Endothelial cell of umbilical vein (primary cell): ENCODE measurements at regions of chr10 and their contacts with region 1.

Region 1: GRCh38 chr10:17249820-17250219 is 21.8 kb downstream of the VIM start:
- DNase-seq: peak; percentile 50
- H3K4me3 ChIP-seq: no peak overlapping the region
- H3K27ac ChIP-seq: no peak overlapping the region
- H3K4me1 ChIP-seq: no peaks in the 10 kb centered on the region
- H3K27me3 ChIP-seq: no peaks in the 10 kb centered on the region
- CTCF ChIP-seq: peak; percentile 45 to 53
- POLR2A ChIP-seq: no peak

Region 2: DNA sequence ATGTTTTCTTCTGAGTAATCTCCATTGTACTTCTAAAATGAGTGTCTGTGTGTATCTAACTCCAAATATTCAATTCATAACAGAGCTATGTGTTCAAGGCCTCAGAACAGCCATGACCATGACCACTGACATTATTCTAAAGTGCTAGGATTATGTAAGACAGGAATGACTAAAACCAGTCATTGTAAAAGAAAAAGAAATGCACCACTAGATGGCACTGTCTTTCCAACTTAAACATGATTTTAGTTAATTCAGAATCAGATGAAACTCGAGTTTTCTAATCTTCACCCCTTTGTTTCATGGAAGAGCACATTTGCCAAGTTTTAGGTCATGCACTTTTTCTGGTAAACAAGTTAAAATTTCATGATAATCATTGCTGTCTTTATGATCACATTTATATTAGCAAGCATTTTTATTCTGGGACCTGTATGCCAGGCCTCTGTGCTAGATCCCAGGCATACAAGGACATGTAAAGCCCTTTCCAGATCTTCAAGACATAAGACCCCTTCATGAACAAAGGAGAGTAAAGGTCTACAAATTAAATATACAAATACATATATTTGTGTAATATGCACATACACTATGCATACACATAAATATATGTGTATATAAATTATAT is 406.5 kb before region 1 on chr10:
- CTCF ChIA-PET with region 1: interaction called, 3 read pairs
- POLR2A ChIA-PET with region 1: interaction called, 4 read pairs
- dilution Hi-C with region 1: no loop called
- intact Hi-C with region 1: loop called (anchors 1 kb)
- DNase-seq: peak; percentile 83
- H3K4me3 ChIP-seq: no peak overlapping the region
- H3K27ac ChIP-seq: peak overlapping the region; percentile 32
- H3K4me1 ChIP-seq: peaks cover 2% of the 10 kb centered on the region
- H3K27me3 ChIP-seq: no peaks in the 10 kb centered on the region
- CTCF ChIP-seq: peak; percentile 19 to 27
- POLR2A ChIP-seq: no peak

Region 3: GRCh38 chr10:16891375-16892313 is 358.2 kb before region 1 on chr10:
- CTCF ChIA-PET with region 1: interaction called, 4 read pairs
- POLR2A ChIA-PET with region 1: no interaction called
- dilution Hi-C with region 1: no loop called
- intact Hi-C with region 1: loop called (anchors 2 kb)
- DNase-seq: peak; percentile 70
- H3K4me3 ChIP-seq: no peak overlapping the region
- H3K27ac ChIP-seq: peak overlapping the region; percentile 5
- H3K4me1 ChIP-seq: peaks cover 8% of the 10 kb centered on the region
- H3K27me3 ChIP-seq: no peaks in the 10 kb centered on the region
- CTCF ChIP-seq: peak; percentile 45 to 58
- POLR2A ChIP-seq: peak; percentile 94